CD4-positive, alpha-beta memory T cell (primary cell): ENCODE measurements at regions of chr6 and their contacts with region 1.

Region 1: DNA sequence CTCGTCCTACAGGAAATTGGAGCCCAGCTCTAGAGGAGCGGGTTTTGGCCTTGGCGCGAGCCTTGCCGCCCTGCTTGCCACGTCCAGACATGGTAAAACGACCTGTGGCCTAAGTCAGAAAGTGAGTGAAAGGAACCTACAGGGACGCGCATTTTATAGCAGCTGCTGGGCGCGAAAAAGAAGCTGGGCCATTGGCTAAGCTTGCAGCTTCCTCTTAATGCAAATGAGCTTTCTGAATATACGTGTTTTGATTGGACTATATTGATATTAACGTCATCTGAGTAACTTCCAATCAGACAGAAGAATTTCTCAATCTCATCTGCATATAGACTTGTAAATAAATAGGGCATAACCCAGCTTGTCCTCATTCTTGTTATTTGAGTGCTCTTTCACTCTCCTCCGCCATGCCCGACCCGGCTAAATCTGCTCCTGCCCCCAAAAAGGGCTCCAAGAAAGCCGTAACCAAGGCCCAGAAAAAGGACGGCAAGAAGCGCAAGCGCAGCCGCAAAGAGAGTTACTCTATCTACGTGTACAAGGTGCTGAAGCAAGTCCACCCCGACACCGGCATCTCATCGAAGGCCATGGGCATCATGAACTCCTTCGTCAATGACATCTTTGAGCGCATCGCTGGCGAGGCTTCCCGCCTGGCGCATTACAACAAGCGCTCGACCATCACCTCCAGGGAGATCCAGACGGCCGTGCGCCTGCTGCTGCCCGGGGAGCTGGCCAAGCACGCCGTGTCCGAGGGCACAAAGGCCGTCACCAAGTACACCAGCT is 18.9 kb downstream of the OR2B2 start:
- DNase-seq: peak; percentile 91 to 94 (median 93)
- H3K4me3 ChIP-seq: peak overlapping the region; percentile 72 to 86
- H3K4me3 Mint-ChIP-seq: no peak overlapping the region
- H3K27ac ChIP-seq: peak overlapping the region; percentile 80
- H3K27ac Mint-ChIP-seq: no peak overlapping the region
- H3K4me1 ChIP-seq: peaks cover 30% of the 10 kb centered on the region
- H3K4me1 Mint-ChIP-seq: peaks cover 15 to 40% (median 28%) of the 10 kb centered on the region in 4 donors
- H3K27me3 ChIP-seq: no peaks in the 10 kb centered on the region
- H3K27me3 Mint-ChIP-seq: no peaks in the 10 kb centered on the region

Region 2: GRCh38 chr6:26122793-26123674 is 1770.2 kb before region 1 on chr6:
- CTCF ChIA-PET with region 1: no interaction called
- POLR2A ChIA-PET with region 1: interaction called, 46 read pairs
- intact Hi-C with region 1: loop called (anchors 1 kb)
- DNase-seq: peak; percentile 94 to 98 (median 98)
- H3K4me3 ChIP-seq: peak overlapping the region; percentile 87 to 98
- H3K4me3 Mint-ChIP-seq: peak overlapping the region; percentile 96 to 100 (median 100)
- H3K27ac ChIP-seq: peak overlapping the region; percentile 89
- H3K27ac Mint-ChIP-seq: peak overlapping the region; percentile 97 to 99 (median 99)
- H3K4me1 ChIP-seq: peaks cover 26% of the 10 kb centered on the region
- H3K4me1 Mint-ChIP-seq: peaks cover 20 to 54% (median 30%) of the 10 kb centered on the region in 4 donors
- H3K27me3 ChIP-seq: no peaks in the 10 kb centered on the region
- H3K27me3 Mint-ChIP-seq: peaks cover 0 to 3% of the 10 kb centered on the region in 2 donors

Region 3: GRCh38 chr6:26285143-26286134 is 1607.8 kb before region 1 on chr6:
- CTCF ChIA-PET with region 1: no interaction called
- POLR2A ChIA-PET with region 1: interaction called, 18 read pairs
- intact Hi-C with region 1: no loop called
- DNase-seq: peak; percentile 91 to 98 (median 95)
- H3K4me3 ChIP-seq: peak overlapping the region; percentile 51 to 75
- H3K4me3 Mint-ChIP-seq: peak overlapping the region; percentile 83 to 95 (median 91)
- H3K27ac ChIP-seq: peak overlapping the region; percentile 81
- H3K27ac Mint-ChIP-seq: peak overlapping the region; percentile 95 to 99 (median 99)
- H3K4me1 ChIP-seq: peaks cover 13% of the 10 kb centered on the region
- H3K4me1 Mint-ChIP-seq: peaks cover 8 to 34% (median 19%) of the 10 kb centered on the region in 4 donors
- H3K27me3 ChIP-seq: no peaks in the 10 kb centered on the region
- H3K27me3 Mint-ChIP-seq: peaks cover 2 to 9% of the 10 kb centered on the region in 2 donors

Region 4: GRCh38 chr6:27177485-27178406 is 715.5 kb before region 1 on chr6:
- CTCF ChIA-PET with region 1: interaction called, 26 read pairs
- POLR2A ChIA-PET with region 1: interaction called, 42 read pairs
- intact Hi-C with region 1: loop called (anchors 1 kb)
- DNase-seq: peak; percentile 68 to 80 (median 70)
- H3K4me3 ChIP-seq: peak overlapping the region; percentile 98
- H3K4me3 Mint-ChIP-seq: peak overlapping the region; percentile 95 to 99 (median 98)
- H3K27ac ChIP-seq: peak overlapping the region; percentile 77
- H3K27ac Mint-ChIP-seq: peak overlapping the region; percentile 86 to 100 (median 93)
- H3K4me1 ChIP-seq: peaks cover 7% of the 10 kb centered on the region
- H3K4me1 Mint-ChIP-seq: peaks cover 5 to 29% (median 13%) of the 10 kb centered on the region in 4 donors
- H3K27me3 ChIP-seq: no peaks in the 10 kb centered on the region
- H3K27me3 Mint-ChIP-seq: peaks cover 3 to 4% of the 10 kb centered on the region in 2 donors

Region 5: GRCh38 chr6:27753668-27754407 is 139.4 kb before region 1 on chr6:
- CTCF ChIA-PET with region 1: interaction called, 38 read pairs
- POLR2A ChIA-PET with region 1: interaction called, 22 read pairs
- intact Hi-C with region 1: loop called (anchors 1 kb)
- DNase-seq: peak; percentile 27 to 66 (median 44)
- H3K4me3 ChIP-seq: peak overlapping the region; percentile 50 to 63
- H3K4me3 Mint-ChIP-seq: peak overlapping the region; percentile 85 to 99 (median 93)
- H3K27ac ChIP-seq: no peak overlapping the region
- H3K27ac Mint-ChIP-seq: peak overlapping the region; percentile 16 to 100 (median 99)
- H3K4me1 ChIP-seq: peaks cover 20% of the 10 kb centered on the region
- H3K4me1 Mint-ChIP-seq: peaks cover 15 to 47% (median 26%) of the 10 kb centered on the region in 4 donors
- H3K27me3 ChIP-seq: no peaks in the 10 kb centered on the region
- H3K27me3 Mint-ChIP-seq: peaks cover 0 to 5% of the 10 kb centered on the region in 2 donors

Region 6: DNA sequence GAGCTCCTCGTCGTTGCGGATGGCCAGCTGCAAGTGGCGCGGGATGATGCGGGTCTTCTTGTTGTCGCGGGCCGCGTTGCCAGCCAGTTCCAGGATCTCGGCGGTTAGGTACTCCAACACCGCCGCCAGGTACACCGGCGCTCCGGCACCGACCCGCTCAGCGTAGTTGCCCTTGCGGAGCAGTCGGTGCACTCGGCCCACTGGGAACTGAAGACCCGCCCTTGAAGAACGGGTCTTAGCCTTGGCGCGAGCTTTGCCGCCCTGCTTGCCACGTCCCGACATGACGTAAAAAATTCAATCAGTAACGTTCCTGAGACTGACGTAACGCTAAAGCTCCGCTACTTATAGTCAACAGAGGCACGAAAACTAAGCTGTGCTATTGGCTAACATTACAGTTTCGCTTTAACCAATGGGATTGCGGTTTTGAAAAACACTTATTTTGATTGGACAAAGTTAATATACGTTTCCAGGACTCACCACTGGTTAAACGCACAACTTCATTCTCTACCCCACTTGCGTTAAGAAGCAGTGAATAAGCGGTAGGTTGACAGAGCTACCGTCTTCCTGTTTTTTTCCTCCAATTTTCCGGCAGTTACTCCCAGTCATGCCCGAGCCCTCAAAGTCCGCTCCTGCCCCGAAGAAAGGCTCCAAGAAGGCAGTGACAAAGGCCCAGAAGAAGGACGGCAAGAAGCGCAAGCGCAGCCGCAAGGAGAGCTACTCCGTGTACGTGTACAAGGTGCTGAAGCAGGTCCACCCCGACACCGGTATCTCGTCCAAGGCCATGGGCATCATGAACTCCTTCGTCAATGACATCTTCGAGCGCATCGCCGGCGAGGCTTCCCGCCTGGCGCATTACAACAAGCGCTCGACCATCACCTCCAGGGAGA is 54.9 kb before region 1 on chr6:
- CTCF ChIA-PET with region 1: interaction called, 100 read pairs
- POLR2A ChIA-PET with region 1: interaction called, 459 read pairs
- intact Hi-C with region 1: loop called (anchors 1 kb)
- DNase-seq: peak; percentile 91 to 94 (median 92)
- H3K4me3 ChIP-seq: peak overlapping the region; percentile 63 to 67
- H3K4me3 Mint-ChIP-seq: no peak overlapping the region
- H3K27ac ChIP-seq: peak overlapping the region; percentile 93
- H3K27ac Mint-ChIP-seq: no peak overlapping the region
- H3K4me1 ChIP-seq: peaks cover 30% of the 10 kb centered on the region
- H3K4me1 Mint-ChIP-seq: peaks cover 6 to 20% (median 12%) of the 10 kb centered on the region in 4 donors
- H3K27me3 ChIP-seq: no peaks in the 10 kb centered on the region
- H3K27me3 Mint-ChIP-seq: peaks cover 2 to 3% of the 10 kb centered on the region in 2 donors

Region 7: GRCh38 chr6:28981833-28982475 is 1088.7 kb after region 1 on chr6:
- CTCF ChIA-PET with region 1: no interaction called
- POLR2A ChIA-PET with region 1: no interaction called
- intact Hi-C with region 1: loop called (anchors 10 kb)
- DNase-seq: peak; percentile 79 to 87 (median 84)
- H3K4me3 ChIP-seq: peak overlapping the region; percentile 99
- H3K4me3 Mint-ChIP-seq: peak overlapping the region; percentile 87 to 95 (median 94)
- H3K27ac ChIP-seq: no peak overlapping the region
- H3K27ac Mint-ChIP-seq: peak overlapping the region; percentile 84 to 100 (median 95)
- H3K4me1 ChIP-seq: peaks cover 28% of the 10 kb centered on the region
- H3K4me1 Mint-ChIP-seq: peaks cover 37 to 65% (median 46%) of the 10 kb centered on the region in 4 donors
- H3K27me3 ChIP-seq: no peaks in the 10 kb centered on the region
- H3K27me3 Mint-ChIP-seq: peaks cover 14 to 24% of the 10 kb centered on the region in 2 donors